ENCODE measurements at regions of chr16 and their contacts with region 1.

Region 1: GRCh38 chr16:27235055-27235937 is 32.0 kb downstream of the KDM8 start:
- DNase-seq: no peak
- ATAC-seq: peak; percentile 10
- H3K4me3 Mint-ChIP-seq: peak overlapping the region; percentile 73
- H3K27ac Mint-ChIP-seq: peak overlapping the region; percentile 88
- H3K4me1 Mint-ChIP-seq: peaks cover 92% of the 10 kb centered on the region
- H3K27me3 Mint-ChIP-seq: no peaks in the 10 kb centered on the region
- CTCF ChIP-seq: peak; percentile 44

Region 2: GRCh38 chr16:27179500-27180072 is 55.7 kb before region 1 on chr16:
- CTCF ChIA-PET with region 1: interaction called, 26 read pairs
- POLR2A ChIA-PET with region 1: interaction called, 7 read pairs
- intact Hi-C with region 1: loop called (anchors 1 kb)
- DNase-seq: peak; percentile 73
- ATAC-seq: peak; percentile 99
- H3K4me3 Mint-ChIP-seq: no peak overlapping the region
- H3K27ac Mint-ChIP-seq: peak overlapping the region; percentile 5
- H3K4me1 Mint-ChIP-seq: peaks cover 28% of the 10 kb centered on the region
- H3K27me3 Mint-ChIP-seq: no peaks in the 10 kb centered on the region
- CTCF ChIP-seq: peak; percentile 49

Region 3: GRCh38 chr16:27268376-27269299 is 33.3 kb after region 1 on chr16 and contains the start of gene NSMCE1:
- CTCF ChIA-PET with region 1: interaction called, 6 read pairs
- POLR2A ChIA-PET with region 1: interaction called, 21 read pairs
- intact Hi-C with region 1: loop called (anchors 1 kb)
- DNase-seq: peak; percentile 92
- ATAC-seq: peak; percentile 97
- H3K4me3 Mint-ChIP-seq: peak within 1 kb of the TSS; percentile 96
- H3K27ac Mint-ChIP-seq: peak within 1 kb of the TSS; percentile 99
- H3K4me1 Mint-ChIP-seq: peaks cover 73% of the 10 kb centered on the region
- H3K27me3 Mint-ChIP-seq: no peaks in the 10 kb centered on the region
- CTCF ChIP-seq: no peak
- total RNA-seq, gene NSMCE1: 61.0 and 68.3 TPM in 2 replicates

Region 4: GRCh38 chr16:27318392-27319226 is 83.3 kb after region 1 on chr16:
- CTCF ChIA-PET with region 1: interaction called, 76 read pairs
- POLR2A ChIA-PET with region 1: interaction called, 90 read pairs
- intact Hi-C with region 1: loop called (anchors 1 kb)
- DNase-seq: peak; percentile 43
- ATAC-seq: peak; percentile 72
- H3K4me3 Mint-ChIP-seq: peak overlapping the region; percentile 88
- H3K27ac Mint-ChIP-seq: peak overlapping the region; percentile 90
- H3K4me1 Mint-ChIP-seq: peaks cover 90% of the 10 kb centered on the region
- H3K27me3 Mint-ChIP-seq: no peaks in the 10 kb centered on the region
- CTCF ChIP-seq: no peak

Region 5: DNA sequence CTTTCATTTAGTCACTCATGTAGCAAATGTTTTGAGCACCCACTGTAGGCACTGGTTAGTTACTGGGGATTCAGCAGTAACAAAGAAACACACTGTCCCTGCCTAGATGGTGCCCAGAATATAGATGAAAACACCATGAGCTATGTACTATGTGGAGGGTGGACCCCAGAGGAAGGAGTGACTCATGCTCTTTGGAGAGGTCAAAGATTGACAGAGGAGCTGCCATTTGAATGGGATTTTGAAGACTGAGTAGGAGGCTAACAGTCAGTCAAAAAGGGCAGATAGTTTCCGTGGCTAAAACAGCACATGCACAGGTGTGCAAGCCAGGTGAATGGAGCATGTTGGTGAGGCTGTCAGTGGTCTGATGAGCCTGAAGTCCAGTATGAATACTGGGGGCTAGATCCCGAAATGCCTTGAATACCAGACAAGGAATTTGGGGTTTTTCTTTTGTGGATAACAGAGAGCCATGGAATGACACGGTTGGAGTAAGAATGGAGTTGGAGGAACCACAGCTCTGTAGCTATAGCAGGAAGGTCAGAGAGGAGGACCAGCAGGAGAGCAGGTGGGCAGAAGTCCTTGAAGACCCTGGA is 172.8 kb after region 1 on chr16:
- CTCF ChIA-PET with region 1: interaction called, 11 read pairs
- POLR2A ChIA-PET with region 1: interaction called, 39 read pairs
- intact Hi-C with region 1: no loop called
- DNase-seq: no peak
- ATAC-seq: peak; percentile 35
- H3K4me3 Mint-ChIP-seq: peak overlapping the region; percentile 71
- H3K27ac Mint-ChIP-seq: peak overlapping the region; percentile 96
- H3K4me1 Mint-ChIP-seq: peaks cover 90% of the 10 kb centered on the region
- H3K27me3 Mint-ChIP-seq: no peaks in the 10 kb centered on the region
- CTCF ChIP-seq: no peak